ENCODE measurements at regions of chr15 and their contacts with region 1.

Region 1: GRCh38 chr15:82262422-82263026 is at the starts of genes EFL1 and SAXO2:
- DNase-seq: peak; percentile 98
- H3K4me3 Mint-ChIP-seq: peak within 1 kb of the TSS; percentile 96
- H3K27ac Mint-ChIP-seq: peak within 1 kb of the TSS; percentile 92
- H3K4me1 Mint-ChIP-seq: peaks cover 28% of the 10 kb centered on the region
- H3K27me3 Mint-ChIP-seq: peaks cover 5% of the 10 kb centered on the region
- total RNA-seq, gene EFL1: 23.7 and 27.2 TPM in 2 replicates
- total RNA-seq, gene SAXO2: 1.1 and 1.8 TPM in 2 replicates

Region 2: GRCh38 chr15:82292271-82292670 is 29.7 kb after region 1 on chr15:
- intact Hi-C with region 1: loop called (anchors 1 kb)
- DNase-seq: no peak
- H3K4me3 Mint-ChIP-seq: no peak overlapping the region
- H3K27ac Mint-ChIP-seq: no peak overlapping the region
- H3K4me1 Mint-ChIP-seq: peaks cover 9% of the 10 kb centered on the region
- H3K27me3 Mint-ChIP-seq: peaks cover 24% of the 10 kb centered on the region